ENCODE measurements at regions of chr6 and their contacts with region 1.

Region 1: GRCh38 chr6:89970609-89971337 is 76.5 kb downstream of the GJA10 start:
- DNase-seq: peak; percentile 74
- ATAC-seq: peak; percentile 93
- H3K4me3 ChIP-seq: no peak overlapping the region
- H3K27ac ChIP-seq: no peak overlapping the region
- H3K4me1 ChIP-seq: no peaks in the 10 kb centered on the region
- H3K27me3 ChIP-seq: no peaks in the 10 kb centered on the region; the same call in 1 of the 2 replicates
- CTCF ChIP-seq: peak; percentile 79
- POLR2A ChIP-seq: no peak
- RAD21 ChIP-seq: peak; percentile 86

Region 2: GRCh38 chr6:88403486-88403885 is 1567.3 kb before region 1 on chr6:
- CTCF ChIA-PET with region 1: no interaction called
- POLR2A ChIA-PET with region 1: no interaction called
- dilution Hi-C with region 1: no loop called
- in situ Hi-C with region 1: no loop called
- intact Hi-C with region 1: no loop called
- DNase-seq: no peak
- ATAC-seq: no peak
- H3K4me3 ChIP-seq: no peak overlapping the region
- H3K27ac ChIP-seq: no peak overlapping the region
- H3K4me1 ChIP-seq: no peaks in the 10 kb centered on the region
- H3K27me3 ChIP-seq: no peaks in the 10 kb centered on the region
- CTCF ChIP-seq: no peak
- POLR2A ChIP-seq: no peak
- RAD21 ChIP-seq: no peak

Region 3: DNA sequence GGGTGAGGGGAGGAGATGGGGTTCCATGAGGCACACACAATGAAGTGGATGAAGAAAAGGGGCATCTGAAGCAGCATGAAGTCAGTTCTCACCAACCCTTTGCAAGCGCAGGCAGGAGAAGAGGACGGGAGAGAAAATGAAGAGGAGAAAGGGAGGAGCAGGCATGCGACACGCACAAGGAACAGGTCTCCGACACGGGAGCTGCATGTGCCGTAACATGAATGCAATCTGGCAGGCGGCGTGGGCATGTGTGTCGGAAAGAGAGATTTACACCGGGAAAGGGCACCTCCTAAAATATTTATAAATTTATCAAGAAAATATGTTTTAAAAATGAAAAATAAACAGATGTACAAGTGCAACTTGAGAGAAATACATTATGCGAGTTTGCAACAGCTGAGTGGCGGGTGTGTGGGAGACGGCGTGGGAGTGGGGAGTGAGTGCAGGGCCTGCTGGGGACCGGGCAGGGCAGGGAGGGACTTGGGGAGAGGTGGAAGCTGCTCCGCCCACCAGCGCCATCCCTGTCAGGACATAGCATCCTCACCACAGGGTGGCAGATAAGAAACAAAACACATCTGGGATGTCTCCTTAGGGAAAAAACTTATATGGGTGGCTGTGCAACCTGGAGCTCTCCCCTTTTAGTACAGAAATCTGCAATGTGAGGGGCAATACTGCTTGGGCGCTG is 35.9 kb before region 1 on chr6:
- CTCF ChIA-PET with region 1: no interaction called
- POLR2A ChIA-PET with region 1: no interaction called
- dilution Hi-C with region 1: no loop called
- in situ Hi-C with region 1: no loop called
- intact Hi-C with region 1: no loop called
- DNase-seq: no peak
- ATAC-seq: no peak
- H3K4me3 ChIP-seq: no peak overlapping the region
- H3K27ac ChIP-seq: no peak overlapping the region
- H3K4me1 ChIP-seq: no peaks in the 10 kb centered on the region
- H3K27me3 ChIP-seq: no peaks in the 10 kb centered on the region
- CTCF ChIP-seq: no peak
- POLR2A ChIP-seq: no peak
- RAD21 ChIP-seq: no peak

Region 4: DNA sequence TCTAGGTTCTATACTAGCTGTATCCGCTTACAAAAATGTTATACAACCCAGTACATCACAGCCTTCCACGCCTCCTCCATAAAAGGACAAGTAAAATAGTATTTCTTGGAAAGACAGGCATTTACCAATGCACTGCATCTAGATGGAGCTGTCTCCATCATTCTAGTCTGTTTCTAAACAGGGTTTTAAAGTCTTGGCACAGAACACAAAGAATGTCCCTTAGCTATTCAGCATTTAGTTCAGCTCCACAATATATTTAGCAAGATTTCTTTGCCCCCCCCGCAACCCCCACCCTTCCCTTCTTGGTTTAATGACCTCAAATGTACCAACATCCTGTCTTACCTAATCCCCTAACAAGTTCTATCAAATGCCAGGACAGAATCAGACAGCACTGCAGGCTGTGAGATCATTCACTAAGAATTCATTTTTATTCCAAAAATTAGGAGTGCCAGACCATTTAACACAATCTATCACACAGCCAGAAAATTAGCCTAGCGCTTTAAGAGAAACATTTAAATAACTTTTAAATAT is 127.3 kb after region 1 on chr6:
- CTCF ChIA-PET with region 1: no interaction called
- POLR2A ChIA-PET with region 1: no interaction called
- dilution Hi-C with region 1: no loop called
- in situ Hi-C with region 1: loop called (anchors 10 kb)
- intact Hi-C with region 1: loop called (anchors 1 kb)
- DNase-seq: peak; percentile 89
- ATAC-seq: peak; percentile 86
- H3K4me3 ChIP-seq: no peak overlapping the region
- H3K27ac ChIP-seq: peak overlapping the region; percentile 9; the same call in 1 of the 2 replicates
- H3K4me1 ChIP-seq: peaks cover 12% of the 10 kb centered on the region
- H3K27me3 ChIP-seq: no peaks in the 10 kb centered on the region
- CTCF ChIP-seq: peak; percentile 59
- POLR2A ChIP-seq: no peak
- RAD21 ChIP-seq: peak; percentile 58

Region 5: DNA sequence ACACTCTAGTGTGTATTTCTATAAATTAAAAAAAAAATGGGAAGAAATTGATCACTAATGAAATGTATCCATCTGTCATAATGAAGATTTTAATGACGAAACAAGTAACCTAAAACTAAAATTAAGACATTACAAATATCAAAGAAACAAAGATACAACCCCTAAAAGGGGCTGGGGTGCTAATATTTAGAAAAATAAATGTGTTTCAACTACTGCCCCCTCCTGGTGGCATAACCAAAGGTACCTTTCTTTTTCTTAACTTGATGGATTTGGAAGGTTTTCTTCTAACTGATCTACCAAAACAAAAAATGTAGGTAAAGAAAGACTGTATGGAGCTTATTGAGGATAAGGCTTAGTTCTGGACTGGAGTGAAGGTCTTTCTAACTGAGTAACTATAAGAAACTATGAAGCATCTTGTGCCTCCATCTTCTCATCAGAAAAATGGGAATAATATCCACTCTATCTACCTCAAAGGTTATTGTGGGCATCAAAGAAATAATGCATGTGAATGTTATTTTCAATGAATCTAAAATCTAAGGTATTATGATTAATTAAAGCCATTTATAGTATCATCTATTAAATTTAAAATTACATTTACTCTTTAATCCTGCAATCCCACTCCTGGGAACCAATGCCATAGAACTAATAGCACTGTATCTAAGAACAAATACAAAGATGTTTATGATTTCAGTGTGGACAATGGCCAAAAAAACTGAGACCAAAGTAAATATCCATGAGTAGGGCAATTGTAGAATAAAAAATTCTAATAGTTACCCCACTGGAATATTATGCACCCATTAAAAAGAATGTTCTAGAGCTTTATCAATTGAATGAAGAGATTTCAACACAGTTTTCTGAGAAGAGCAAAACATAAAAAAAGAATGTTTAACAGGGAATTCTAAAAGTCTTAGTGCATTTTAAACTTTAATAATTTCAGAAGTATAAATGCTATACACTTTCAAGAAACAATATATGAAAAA is 208.7 kb after region 1 on chr6:
- CTCF ChIA-PET with region 1: no interaction called
- POLR2A ChIA-PET with region 1: no interaction called
- dilution Hi-C with region 1: no loop called
- in situ Hi-C with region 1: no loop called
- intact Hi-C with region 1: loop called (anchors 2 kb)
- DNase-seq: no peak
- ATAC-seq: no peak
- H3K4me3 ChIP-seq: no peak overlapping the region
- H3K27ac ChIP-seq: no peak overlapping the region
- H3K4me1 ChIP-seq: peaks cover 10% of the 10 kb centered on the region
- H3K27me3 ChIP-seq: no peaks in the 10 kb centered on the region; the same call in none of the 2 replicates
- CTCF ChIP-seq: peak; percentile 43
- POLR2A ChIP-seq: no peak
- RAD21 ChIP-seq: peak; percentile 27; the same call in 1 of the 2 replicates

Region 6: DNA sequence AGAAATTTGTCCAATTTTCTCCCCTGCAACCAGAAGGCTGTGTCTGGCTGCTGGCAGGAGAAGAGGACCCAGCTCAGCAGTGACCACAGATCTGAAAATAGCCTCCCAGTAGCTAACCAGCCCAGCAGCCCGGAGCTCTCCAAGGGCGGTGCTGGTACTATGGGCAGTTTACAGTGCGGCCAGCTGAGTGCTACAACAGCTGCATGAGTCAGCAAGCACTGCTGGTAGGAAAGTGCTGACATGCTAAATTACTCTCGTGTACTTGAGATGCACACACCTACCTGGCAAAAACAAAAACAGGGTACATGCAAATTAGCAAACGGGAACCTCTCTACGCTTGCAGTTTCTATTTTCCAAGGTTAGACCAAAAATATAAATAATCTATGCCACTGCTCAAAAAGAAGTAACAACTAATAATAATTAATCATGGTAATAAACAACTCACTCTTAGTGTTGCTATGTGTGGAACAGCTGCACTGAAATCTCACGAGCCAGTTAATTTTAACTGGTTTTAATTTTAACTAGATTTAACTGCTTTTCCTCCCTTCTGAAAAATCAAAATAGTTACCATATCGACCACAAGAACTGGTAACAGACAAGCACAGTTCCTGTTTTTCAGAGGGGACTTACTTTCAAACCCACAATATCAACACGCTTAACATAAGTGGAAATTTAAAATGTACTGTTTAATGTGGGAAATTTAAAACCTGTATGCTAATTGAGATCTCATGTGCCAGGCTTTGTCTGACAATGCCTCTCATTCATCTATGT is 315.0 kb after region 1 on chr6:
- CTCF ChIA-PET with region 1: no interaction called
- POLR2A ChIA-PET with region 1: no interaction called
- dilution Hi-C with region 1: no loop called
- in situ Hi-C with region 1: loop called (anchors 10 kb)
- intact Hi-C with region 1: no loop called
- DNase-seq: peak; percentile 91
- ATAC-seq: peak; percentile 94
- H3K4me3 ChIP-seq: no peak overlapping the region
- H3K27ac ChIP-seq: no peak overlapping the region
- H3K4me1 ChIP-seq: no peaks in the 10 kb centered on the region
- H3K27me3 ChIP-seq: no peaks in the 10 kb centered on the region
- CTCF ChIP-seq: no peak
- POLR2A ChIP-seq: no peak
- RAD21 ChIP-seq: no peak; the same call in 1 of the 2 replicates

Region 7: DNA sequence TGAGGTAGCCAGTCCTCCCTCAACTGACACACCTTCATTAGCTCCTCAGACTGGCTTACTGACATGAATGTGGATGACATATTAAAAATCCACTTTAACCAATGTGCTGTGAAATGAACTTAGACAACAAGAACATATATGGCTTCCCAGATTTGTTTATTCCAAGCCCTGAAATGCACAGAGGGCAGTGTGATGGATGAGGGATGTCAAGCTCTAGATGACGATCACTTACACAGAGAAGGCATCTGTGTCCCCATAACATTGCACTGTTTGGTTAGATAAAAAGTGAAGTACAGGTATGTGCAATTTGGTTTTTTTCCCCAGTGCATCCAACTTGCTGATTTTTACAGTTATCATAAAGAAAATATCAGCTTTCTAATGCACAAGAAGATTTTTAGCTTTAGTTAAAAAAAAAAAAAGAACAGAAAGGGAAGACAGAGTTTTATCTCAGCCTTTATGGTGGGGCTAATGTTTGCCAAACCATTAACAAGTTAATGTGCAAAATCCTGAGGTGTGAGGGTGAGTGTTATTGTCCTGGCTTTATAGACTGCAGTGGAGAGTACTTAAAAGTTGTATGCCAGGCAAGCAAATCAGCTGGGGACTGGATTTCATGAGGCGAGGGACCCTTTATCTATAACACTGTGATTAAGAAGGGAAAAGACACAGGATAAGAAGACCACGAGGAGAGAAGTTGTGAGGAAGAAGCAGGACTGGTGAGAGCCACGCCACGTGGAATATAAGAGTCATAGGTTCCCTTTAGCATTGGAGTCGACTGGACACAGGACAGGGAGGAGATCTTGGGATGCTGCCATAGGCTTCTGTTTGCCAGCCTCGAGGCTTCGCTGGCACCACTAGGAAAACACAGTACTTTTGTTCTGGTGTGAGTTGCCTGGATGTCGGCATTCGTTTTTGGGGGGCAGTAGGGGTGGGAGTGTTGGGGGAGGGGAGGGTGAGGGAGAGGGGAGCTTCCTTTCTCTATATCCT is 415.9 kb after region 1 on chr6:
- CTCF ChIA-PET with region 1: no interaction called
- POLR2A ChIA-PET with region 1: no interaction called
- dilution Hi-C with region 1: no loop called
- in situ Hi-C with region 1: loop called (anchors 5 kb)
- intact Hi-C with region 1: no loop called
- DNase-seq: no peak
- ATAC-seq: no peak
- H3K4me3 ChIP-seq: no peak overlapping the region
- H3K27ac ChIP-seq: no peak overlapping the region
- H3K4me1 ChIP-seq: peaks cover 2% of the 10 kb centered on the region; the same call in 1 of the 2 replicates
- H3K27me3 ChIP-seq: peaks cover 19% of the 10 kb centered on the region
- CTCF ChIP-seq: no peak
- POLR2A ChIP-seq: no peak
- RAD21 ChIP-seq: no peak

Region 8: GRCh38 chr6:90393232-90393884 is 422.6 kb after region 1 on chr6:
- CTCF ChIA-PET with region 1: interaction called, 4 read pairs
- POLR2A ChIA-PET with region 1: no interaction called
- dilution Hi-C with region 1: no loop called
- in situ Hi-C with region 1: loop called (anchors 5 kb)
- intact Hi-C with region 1: loop called (anchors 1 kb)
- DNase-seq: peak; percentile 71
- ATAC-seq: peak; percentile 93
- H3K4me3 ChIP-seq: no peak overlapping the region
- H3K27ac ChIP-seq: no peak overlapping the region
- H3K4me1 ChIP-seq: no peaks in the 10 kb centered on the region
- H3K27me3 ChIP-seq: peaks cover 20% of the 10 kb centered on the region
- CTCF ChIP-seq: peak; percentile 81
- POLR2A ChIP-seq: no peak
- RAD21 ChIP-seq: peak; percentile 91

Region 9: DNA sequence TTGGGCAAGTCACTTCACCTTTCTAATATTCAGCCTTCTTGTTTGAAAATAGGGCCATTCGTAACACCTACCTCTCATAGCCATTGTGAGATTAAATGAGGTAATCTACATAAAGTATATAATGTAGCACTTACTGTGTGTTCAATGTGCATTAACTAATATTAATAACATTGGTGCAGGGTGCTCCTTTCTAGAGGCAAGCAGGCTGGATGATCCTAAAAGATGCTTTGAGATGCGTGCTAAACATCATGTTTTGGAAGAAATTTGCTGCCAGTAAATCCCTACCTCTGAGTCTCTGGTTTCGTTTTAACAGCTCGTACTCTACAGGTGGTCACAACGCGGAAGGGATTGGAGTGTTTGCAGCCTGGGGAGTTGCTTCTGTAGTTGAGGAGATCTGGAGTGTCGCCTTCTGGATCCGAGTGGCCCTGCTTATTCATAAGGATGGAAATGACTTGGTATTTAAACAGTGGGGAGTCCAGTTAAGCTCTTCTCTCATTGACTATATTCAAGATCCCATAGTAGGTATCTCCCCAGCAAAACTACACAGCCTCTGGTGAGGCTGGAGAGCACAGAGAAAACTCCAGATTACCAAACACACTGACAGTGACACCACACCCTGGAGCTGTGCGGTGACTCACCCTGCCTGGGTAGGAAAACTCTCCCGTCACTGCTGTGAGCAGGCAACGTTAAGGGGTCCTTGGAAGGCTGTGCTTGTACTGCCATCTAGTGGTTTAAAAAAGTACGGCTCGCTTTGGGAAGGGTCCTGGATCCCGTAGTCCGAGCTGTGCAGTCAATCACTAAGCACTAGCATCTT is 508.2 kb after region 1 on chr6:
- CTCF ChIA-PET with region 1: interaction called, 7 read pairs
- POLR2A ChIA-PET with region 1: no interaction called
- dilution Hi-C with region 1: no loop called
- in situ Hi-C with region 1: no loop called
- intact Hi-C with region 1: loop called (anchors 1 kb)
- DNase-seq: peak; percentile 95
- ATAC-seq: peak; percentile 99
- H3K4me3 ChIP-seq: no peak overlapping the region
- H3K27ac ChIP-seq: no peak overlapping the region
- H3K4me1 ChIP-seq: no peaks in the 10 kb centered on the region; the same call in 1 of the 2 replicates
- H3K27me3 ChIP-seq: peaks cover 5% of the 10 kb centered on the region; the same call in 1 of the 2 replicates
- CTCF ChIP-seq: peak; percentile 98
- POLR2A ChIP-seq: peak; percentile 62
- RAD21 ChIP-seq: peak; percentile 100